ENCODE measurements at regions of chr4 and their contacts with region 1.

Region 1: DNA sequence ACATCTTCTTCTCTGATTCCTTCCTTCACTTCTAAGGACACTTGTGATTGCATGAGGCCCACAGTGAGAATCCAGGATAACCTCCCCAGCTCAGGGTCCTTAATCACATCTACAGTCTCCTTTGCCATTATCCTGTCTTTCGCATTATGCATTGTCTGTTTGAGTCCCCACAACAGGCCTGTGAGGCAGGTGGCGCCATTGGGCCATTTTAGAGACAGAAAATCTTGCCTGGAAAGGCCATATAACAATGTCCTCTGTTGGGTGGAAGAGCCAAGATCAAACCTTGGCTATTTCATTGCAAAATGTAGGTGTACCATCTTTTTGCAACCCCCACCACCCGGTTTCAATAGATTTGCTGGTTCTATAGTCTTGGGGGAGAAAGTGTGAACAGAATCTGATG is 11.8 kb upstream of the DCUN1D4 start:
- DNase-seq: peak; percentile 29
- H3K4me3 ChIP-seq: no peak overlapping the region
- H3K27ac ChIP-seq: no peak overlapping the region
- H3K4me1 ChIP-seq: no peaks in the 10 kb centered on the region
- H3K27me3 ChIP-seq: peaks cover 2% of the 10 kb centered on the region
- CTCF ChIP-seq: peak; percentile 65 to 82

Region 2: DNA sequence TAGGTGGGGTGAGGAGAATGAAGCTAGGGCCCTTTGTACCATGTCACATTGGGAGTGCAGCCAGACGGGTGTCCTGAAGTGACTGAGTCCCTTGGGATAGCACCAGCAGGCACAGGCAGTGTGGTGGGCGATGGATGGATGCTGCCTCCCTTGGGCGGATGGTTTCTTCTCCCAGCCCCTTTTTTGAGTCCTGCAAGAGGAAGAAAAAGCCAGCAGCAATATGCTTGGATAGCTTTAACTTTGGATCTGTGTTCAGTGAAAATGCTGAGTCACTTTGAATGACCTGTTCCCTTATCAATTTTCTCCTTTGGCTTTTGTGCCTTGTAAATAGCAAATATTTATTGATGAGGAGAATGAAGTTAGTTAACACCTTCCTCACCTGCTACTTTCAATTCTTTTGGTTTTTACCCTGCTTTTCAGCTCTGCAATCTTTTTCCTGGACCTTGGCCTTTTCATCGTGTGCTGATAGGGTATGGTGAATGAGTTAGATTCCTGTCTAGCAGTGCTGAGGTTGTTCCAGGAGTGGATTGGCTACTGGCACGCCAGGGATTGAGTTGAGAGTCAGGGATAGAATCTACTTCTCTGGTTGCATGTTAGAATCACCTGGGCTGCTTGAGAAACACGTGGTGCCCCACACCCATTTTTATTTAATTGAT is 22.0 kb after region 1 on chr4:
- CTCF ChIA-PET with region 1: no interaction called
- dilution Hi-C with region 1: no loop called
- in situ Hi-C with region 1: no loop called
- intact Hi-C with region 1: no loop called
- DNase-seq: no peak
- H3K4me3 ChIP-seq: no peak overlapping the region
- H3K27ac ChIP-seq: no peak overlapping the region
- H3K4me1 ChIP-seq: peaks cover 5% of the 10 kb centered on the region
- H3K27me3 ChIP-seq: no peaks in the 10 kb centered on the region
- CTCF ChIP-seq: no peak

Region 3: GRCh38 chr4:51885363-51885762 is 54.2 kb after region 1 on chr4:
- CTCF ChIA-PET with region 1: no interaction called
- dilution Hi-C with region 1: no loop called
- in situ Hi-C with region 1: no loop called
- intact Hi-C with region 1: loop called (anchors 1 kb)
- DNase-seq: no peak
- H3K4me3 ChIP-seq: no peak overlapping the region
- H3K27ac ChIP-seq: no peak overlapping the region
- H3K4me1 ChIP-seq: no peaks in the 10 kb centered on the region
- H3K27me3 ChIP-seq: no peaks in the 10 kb centered on the region
- CTCF ChIP-seq: peak; percentile 22 to 50

Region 4: DNA sequence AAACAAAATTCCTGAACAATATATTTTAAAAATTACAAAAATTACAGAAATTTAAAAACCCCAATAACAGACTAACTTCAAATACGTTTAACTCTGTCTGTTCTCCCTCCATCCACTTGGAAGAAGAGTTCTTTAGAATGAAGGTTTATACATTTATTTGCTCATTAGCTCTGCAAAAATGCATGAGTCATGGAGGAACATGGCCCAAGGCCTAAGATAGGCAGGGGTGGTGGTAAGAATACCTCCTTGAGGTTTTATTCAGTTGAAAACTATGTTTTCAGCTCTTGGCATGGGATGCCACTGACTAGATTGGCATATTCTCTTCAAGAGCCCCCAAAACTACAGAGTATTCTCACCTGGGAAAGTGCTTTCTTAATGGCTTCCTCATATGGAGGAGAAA is 197.8 kb after region 1 on chr4:
- CTCF ChIA-PET with region 1: no interaction called
- dilution Hi-C with region 1: no loop called
- in situ Hi-C with region 1: no loop called
- intact Hi-C with region 1: loop called (anchors 1 kb)
- DNase-seq: peak; percentile 72
- H3K4me3 ChIP-seq: no peak overlapping the region
- H3K27ac ChIP-seq: no peak overlapping the region
- H3K4me1 ChIP-seq: peaks cover 4% of the 10 kb centered on the region
- H3K27me3 ChIP-seq: no peaks in the 10 kb centered on the region
- CTCF ChIP-seq: no peak

Region 5: DNA sequence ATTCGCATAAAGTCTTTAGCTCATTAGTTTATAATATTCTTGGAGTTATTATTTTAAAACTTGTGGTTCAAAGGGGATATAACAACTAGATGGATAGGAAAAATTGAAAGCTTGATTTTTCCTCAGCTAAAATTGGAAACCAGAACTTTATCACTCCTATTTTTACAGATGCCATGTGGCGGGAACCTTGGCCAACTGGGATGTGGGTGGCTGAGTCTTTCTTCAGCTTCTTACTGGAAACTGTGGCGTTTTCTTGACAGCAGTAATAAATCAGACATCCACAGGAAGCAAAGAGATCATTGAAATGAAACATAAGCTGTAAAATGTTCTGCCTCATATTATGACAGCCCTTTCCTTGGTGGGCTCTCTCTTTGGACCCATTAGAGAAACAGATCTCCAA is 304.0 kb after region 1 on chr4:
- CTCF ChIA-PET with region 1: no interaction called
- dilution Hi-C with region 1: no loop called
- in situ Hi-C with region 1: no loop called
- intact Hi-C with region 1: loop called (anchors 1 kb)
- DNase-seq: no peak
- H3K4me3 ChIP-seq: no peak overlapping the region
- H3K27ac ChIP-seq: no peak overlapping the region
- H3K4me1 ChIP-seq: no peaks in the 10 kb centered on the region
- H3K27me3 ChIP-seq: no peaks in the 10 kb centered on the region
- CTCF ChIP-seq: no peak

Region 6: GRCh38 chr4:52172166-52172565 is 341.0 kb after region 1 on chr4:
- CTCF ChIA-PET with region 1: no interaction called
- dilution Hi-C with region 1: no loop called
- in situ Hi-C with region 1: no loop called
- intact Hi-C with region 1: loop called (anchors 1 kb)
- DNase-seq: peak; percentile 9
- H3K4me3 ChIP-seq: no peak overlapping the region
- H3K27ac ChIP-seq: no peak overlapping the region
- H3K4me1 ChIP-seq: no peaks in the 10 kb centered on the region
- H3K27me3 ChIP-seq: no peaks in the 10 kb centered on the region
- CTCF ChIP-seq: peak; percentile 46 to 52

Measured in mammary epithelial cell (primary cell).